Ascending aorta (tissue), 2 donors: ENCODE measurements at regions of chr3 and their contacts with region 1.

Region 1: DNA sequence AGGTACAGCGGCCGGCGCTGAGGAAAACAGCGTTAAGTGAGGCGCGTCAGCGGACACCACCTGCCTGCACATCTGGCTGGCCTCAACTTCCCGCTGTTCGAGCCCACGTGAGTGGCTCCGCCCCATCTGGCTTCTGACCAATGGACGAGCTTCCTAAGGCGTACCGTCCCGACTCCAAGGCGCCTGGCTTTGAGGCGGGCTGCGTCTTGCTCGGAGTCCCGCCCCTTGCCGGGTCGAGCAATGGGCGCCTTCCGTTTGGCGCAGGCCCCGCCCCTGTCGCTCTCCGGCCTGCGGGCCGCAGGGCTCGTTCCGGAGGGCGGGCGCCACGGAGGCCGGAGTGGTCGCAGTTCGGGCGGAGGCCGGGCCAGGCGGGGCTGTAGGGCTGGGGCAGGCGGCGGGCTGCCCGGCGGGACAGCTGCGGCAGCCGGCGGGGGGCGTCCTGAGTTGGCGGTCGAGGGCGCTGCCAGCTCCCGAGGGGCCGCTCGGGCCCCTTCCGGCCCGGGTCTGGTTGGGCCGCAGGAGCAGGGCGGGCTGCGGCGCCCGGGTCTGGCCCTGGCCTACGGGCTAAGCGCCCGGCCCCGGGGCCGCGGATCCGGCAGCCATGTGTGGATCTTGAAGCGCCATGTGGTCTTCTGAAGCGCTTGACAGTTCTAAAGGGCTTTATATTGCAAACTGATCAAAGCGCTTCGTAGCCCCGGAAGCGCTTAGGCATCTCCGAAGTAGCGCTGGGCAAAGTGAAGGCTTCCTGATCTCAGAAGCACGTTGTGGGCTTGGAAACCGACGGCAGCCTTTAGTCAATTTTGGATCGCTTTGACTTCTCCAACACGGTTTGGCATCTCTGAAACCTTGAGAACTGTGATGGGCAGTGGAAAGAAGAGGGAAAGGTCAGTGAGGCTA is at the start of gene TATDN2:
- DNase-seq: peak; percentile 91 to 97
- H3K4me3 ChIP-seq: peak within 1 kb of the TSS; percentile 86 to 98
- H3K27ac ChIP-seq: peak within 1 kb of the TSS; percentile 88 to 93
- H3K4me1 ChIP-seq: peaks cover 2 to 25% of the 10 kb centered on the region in 2 donors
- H3K27me3 ChIP-seq: no peaks in the 10 kb centered on the region
- CTCF ChIP-seq: no peak
- total RNA-seq, gene TATDN2: 29.1 TPM

Region 2: DNA sequence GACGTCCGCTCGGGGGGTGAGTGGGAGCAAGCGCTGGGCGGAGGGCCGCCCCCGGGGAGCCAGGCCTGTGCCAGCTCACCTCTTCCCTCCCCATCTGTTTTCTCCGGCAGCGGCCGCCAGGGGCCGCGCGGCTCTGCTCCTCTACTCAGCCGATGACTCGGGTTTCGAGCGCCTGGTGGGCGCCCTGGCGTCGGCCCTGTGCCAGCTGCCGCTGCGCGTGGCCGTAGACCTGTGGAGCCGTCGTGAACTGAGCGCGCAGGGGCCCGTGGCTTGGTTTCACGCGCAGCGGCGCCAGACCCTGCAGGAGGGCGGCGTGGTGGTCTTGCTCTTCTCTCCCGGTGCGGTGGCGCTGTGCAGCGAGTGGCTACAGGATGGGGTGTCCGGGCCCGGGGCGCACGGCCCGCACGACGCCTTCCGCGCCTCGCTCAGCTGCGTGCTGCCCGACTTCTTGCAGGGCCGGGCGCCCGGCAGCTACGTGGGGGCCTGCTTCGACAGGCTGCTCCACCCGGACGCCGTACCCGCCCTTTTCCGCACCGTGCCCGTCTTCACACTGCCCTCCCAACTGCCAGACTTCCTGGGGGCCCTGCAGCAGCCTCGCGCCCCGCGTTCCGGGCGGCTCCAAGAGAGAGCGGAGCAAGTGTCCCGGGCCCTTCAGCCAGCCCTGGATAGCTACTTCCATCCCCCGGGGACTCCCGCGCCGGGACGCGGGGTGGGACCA is 315.4 kb before region 1 on chr3:
- intact Hi-C with region 1: loop called (anchors 10 kb)
- DNase-seq: peak; percentile 53 to 96
- H3K4me3 ChIP-seq: peak overlapping the region; percentile 82 to 96
- H3K27ac ChIP-seq: peak overlapping the region; percentile 97 to 99
- H3K4me1 ChIP-seq: peaks cover 11 to 21% of the 10 kb centered on the region in 2 donors
- H3K27me3 ChIP-seq: no peaks in the 10 kb centered on the region
- CTCF ChIP-seq: peak; percentile 84 to 93 (median 89)

Region 3: DNA sequence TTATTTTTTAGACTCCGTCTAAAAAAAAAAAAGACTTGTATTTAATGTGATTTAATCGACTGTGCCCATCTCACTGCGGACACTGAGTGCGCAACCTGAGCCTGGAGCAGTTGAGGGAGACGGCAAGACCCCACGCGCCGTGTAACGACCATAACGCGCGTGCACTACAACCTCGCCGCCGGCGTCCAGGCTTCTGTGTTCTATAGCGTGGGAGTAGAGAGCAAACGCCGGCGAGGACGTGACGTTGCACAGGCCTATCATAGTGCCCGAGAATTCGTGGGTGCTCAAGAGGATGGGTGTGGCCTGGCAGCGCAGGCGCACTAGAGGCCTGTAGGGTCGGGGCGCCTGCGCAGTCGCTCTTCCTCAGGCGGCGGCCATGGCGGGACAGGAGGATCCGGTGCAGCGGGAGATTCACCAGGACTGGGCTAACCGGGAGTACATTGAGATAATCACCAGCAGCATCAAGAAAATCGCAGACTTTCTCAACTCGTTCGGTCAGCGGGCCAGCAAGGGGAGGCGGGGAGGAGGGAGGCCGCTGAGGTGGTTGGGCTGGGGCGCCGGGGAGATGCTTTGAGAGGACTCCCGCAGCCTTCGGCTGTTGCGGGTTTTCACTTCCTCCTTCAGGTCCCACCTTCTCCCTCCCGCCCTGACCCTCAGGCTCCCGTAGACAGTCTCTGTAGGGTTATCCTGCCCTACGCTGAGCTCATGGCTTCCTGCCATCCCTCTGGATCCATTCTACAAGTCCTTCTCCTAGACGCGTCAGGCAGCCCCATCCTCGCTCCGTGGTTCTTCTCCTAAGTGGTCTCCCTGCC is 132.9 kb before region 1 on chr3 and contains the start of gene BRK1:
- intact Hi-C with region 1: loop called (anchors 1 kb)
- DNase-seq: peak; percentile 87 to 98
- H3K4me3 ChIP-seq: peak within 1 kb of the TSS; percentile 75 to 76
- H3K27ac ChIP-seq: peak within 1 kb of the TSS; percentile 55 to 74
- H3K4me1 ChIP-seq: peaks cover 6 to 11% of the 10 kb centered on the region in 2 donors
- H3K27me3 ChIP-seq: no peaks in the 10 kb centered on the region
- CTCF ChIP-seq: no peak
- total RNA-seq, gene BRK1: 87.3 TPM

Region 4: DNA sequence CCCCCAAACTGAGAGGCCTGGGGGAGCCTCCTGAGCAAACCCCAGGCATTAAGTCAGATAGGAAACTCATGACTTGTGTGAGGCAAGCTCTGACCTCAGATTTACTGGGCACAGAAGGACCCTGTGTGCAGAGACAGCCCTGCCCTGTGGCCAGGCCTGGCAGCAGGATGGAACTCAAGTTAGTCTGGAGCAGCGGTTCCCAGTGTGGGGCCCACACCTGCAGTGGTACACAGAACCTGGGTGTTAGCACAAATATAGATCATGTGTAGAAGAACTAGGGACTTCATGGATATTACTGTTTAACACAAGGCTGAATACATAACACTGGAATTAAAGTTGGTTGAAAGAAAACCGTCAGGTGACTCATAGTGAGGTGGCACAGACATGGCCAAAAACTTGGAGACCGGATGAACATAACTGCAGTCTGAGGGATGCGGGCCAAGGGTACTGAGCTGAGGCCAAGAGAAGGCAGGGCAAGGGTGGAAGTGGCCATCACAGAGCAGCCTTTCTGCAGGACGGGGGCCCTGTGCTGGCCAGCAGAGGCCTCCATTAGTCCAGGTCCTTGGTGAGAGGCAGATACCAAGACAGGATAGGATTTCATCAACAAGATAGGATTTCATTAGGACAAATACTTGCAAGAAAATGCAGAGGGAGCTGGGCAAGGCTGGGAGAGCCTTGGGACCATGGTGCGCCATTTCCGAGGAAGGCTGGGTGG is 42.8 kb before region 1 on chr3:
- intact Hi-C with region 1: loop called (anchors 1 kb)
- DNase-seq: peak; percentile 68 to 93
- H3K4me3 ChIP-seq: no peak overlapping the region
- H3K27ac ChIP-seq: peak overlapping the region; percentile 90 to 92
- H3K4me1 ChIP-seq: peaks cover 16 to 35% of the 10 kb centered on the region in 2 donors
- H3K27me3 ChIP-seq: no peaks in the 10 kb centered on the region
- CTCF ChIP-seq: no peak

Region 5: GRCh38 chr3:10273702-10274305 is 25.4 kb after region 1 on chr3:
- intact Hi-C with region 1: no loop called
- DNase-seq: no peak
- H3K4me3 ChIP-seq: no peak overlapping the region
- H3K27ac ChIP-seq: no peak overlapping the region
- H3K4me1 ChIP-seq: peaks cover 0 to 6% of the 10 kb centered on the region in 2 donors
- H3K27me3 ChIP-seq: no peaks in the 10 kb centered on the region
- CTCF ChIP-seq: no peak

Region 6: GRCh38 chr3:10322352-10322710 is 73.9 kb after region 1 on chr3:
- intact Hi-C with region 1: loop called (anchors 2 kb)
- DNase-seq: no peak
- H3K4me3 ChIP-seq: no peak overlapping the region
- H3K27ac ChIP-seq: no peak overlapping the region
- H3K4me1 ChIP-seq: peaks cover 8 to 14% of the 10 kb centered on the region in 2 donors
- H3K27me3 ChIP-seq: no peaks in the 10 kb centered on the region
- CTCF ChIP-seq: no peak